Left colon (tissue), 2 donors: ENCODE measurements at regions of chr1 and their contacts with region 1.

Region 1: GRCh38 chr1:84944767-84945486 is 51.9 kb upstream of the LPAR3 start:
- DNase-seq: peak; percentile 33 to 73
- ATAC-seq: peak; percentile 96

Region 2: GRCh38 chr1:84996846-84997666 is 52.1 kb after region 1 on chr1 and contains the start of gene MCOLN2:
- intact Hi-C with region 1: no loop called
- DNase-seq: peak; percentile 50 to 62
- ATAC-seq: peak; percentile 93
- total RNA-seq, gene MCOLN2: 25.2 to 87.3 TPM

Region 3: GRCh38 chr1:85027242-85027983 is 82.5 kb after region 1 on chr1:
- intact Hi-C with region 1: loop called in 1 of 2 experiments (anchors 10 kb)
- DNase-seq: no peak
- ATAC-seq: peak; percentile 70

Region 4: DNA sequence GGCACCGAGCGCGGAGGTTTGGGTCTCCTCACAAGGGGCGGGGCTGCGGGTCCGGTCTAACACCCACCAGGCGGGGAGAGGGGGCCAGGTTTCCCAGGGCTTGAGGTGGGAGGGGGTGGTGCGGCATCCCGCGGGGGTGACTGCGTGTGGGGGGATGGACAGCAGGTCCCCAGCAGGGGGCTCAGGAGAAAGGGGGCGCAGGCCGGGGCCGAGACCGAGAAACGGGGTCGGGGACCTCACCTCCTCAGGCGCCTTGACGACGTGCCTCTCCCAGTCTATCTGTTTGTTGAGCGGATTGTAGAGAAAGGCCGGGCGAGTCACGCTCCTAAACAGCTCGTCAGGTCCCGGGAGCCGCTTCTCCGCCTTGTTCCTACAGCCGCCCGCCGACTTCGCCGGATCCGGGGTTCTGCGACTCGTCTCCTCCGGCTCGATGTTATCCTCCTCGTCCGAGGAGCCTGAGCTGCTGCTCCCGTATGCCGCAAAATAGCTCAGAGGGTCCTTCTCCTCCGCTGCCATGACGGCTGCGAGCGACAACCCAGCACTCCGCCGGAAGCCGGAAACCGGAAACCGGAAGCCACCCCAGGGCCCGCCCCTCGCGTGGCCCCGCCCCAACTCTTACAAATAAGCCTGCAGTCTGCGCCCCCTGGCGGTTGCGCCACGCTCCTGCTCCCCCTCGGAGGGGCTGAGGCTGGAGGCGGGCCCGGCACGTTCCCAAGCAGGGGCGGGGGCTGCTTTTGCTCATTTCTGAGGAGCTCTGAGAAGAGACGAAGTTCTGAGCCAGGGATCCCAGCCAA is 314.4 kb after region 1 on chr1 and contains the start of gene C1orf52:
- intact Hi-C with region 1: loop called (anchors 5 to 10 kb)
- DNase-seq: peak; percentile 93 to 98
- ATAC-seq: peak; percentile 90
- total RNA-seq, gene C1orf52: 17.4 to 20.3 TPM

Region 5: GRCh38 chr1:85330711-85331290 is 385.9 kb after region 1 on chr1:
- intact Hi-C with region 1: no loop called
- DNase-seq: peak in 1 of 2 donors; percentile 11
- ATAC-seq: no peak